HCT116 (cell line): ENCODE measurements at regions of chr3 and their contacts with region 1.

Region 1: GRCh38 chr3:189652042-189652441 is 20.9 kb downstream of the TP63 start:
- DNase-seq: peak; percentile 21
- ATAC-seq: peak; percentile 88
- H3K4me3 ChIP-seq: no peak overlapping the region
- H3K27ac ChIP-seq: no peak overlapping the region
- H3K4me1 ChIP-seq: no peaks in the 10 kb centered on the region
- H3K27me3 ChIP-seq: no peaks in the 10 kb centered on the region
- CTCF ChIP-seq: peak; percentile 46 to 81 (median 74); a peak in 5 of 6 replicates
- POLR2A ChIP-seq: no peak
- RAD21 ChIP-seq: peak; percentile 58

Region 2: DNA sequence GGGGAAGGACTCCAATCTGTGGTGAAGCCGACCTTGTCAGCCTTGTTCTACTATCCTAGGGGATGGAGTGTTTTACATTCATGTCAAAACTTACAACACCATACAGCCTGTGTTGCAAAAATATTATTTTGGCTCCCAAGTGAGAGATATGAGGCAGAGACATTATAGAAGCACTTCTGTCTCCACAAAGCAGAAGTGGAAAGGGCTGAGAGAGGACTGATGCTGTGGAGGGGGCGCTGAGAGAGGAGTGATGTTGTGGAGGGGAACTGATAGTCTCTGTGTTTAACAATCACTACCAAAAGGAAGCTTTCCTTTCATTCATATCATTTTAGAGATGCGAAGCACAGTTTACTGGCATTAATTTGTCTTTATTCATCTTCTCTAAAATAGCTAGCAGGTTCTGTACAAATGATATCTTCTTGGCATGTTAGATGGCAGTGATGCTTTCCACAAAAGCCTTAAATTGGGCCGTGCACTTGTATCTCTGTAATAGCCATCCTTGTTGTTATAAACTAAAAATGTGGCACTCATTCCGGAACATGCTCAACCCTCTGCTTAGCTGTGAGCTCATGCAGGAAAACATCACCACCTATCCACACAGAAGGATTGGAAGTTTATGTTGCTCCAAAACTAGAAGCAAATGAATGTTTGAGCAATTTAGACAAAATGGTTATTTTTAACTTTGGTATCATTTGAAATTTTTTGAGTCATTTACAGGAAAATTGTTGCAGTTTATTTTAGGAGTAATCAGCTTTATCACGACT is 155.5 kb before region 1 on chr3:
- CTCF ChIA-PET with region 1: no interaction called
- POLR2A ChIA-PET with region 1: no interaction called
- RAD21 ChIA-PET with region 1: no interaction called
- intact Hi-C with region 1: no loop called
- DNase-seq: no peak
- ATAC-seq: no peak
- H3K4me3 ChIP-seq: no peak overlapping the region
- H3K27ac ChIP-seq: no peak overlapping the region
- H3K4me1 ChIP-seq: no peaks in the 10 kb centered on the region
- H3K27me3 ChIP-seq: no peaks in the 10 kb centered on the region
- CTCF ChIP-seq: no peak
- POLR2A ChIP-seq: no peak
- RAD21 ChIP-seq: no peak

Region 3: GRCh38 chr3:189630767-189631372 is 21.2 kb before region 1 on chr3:
- CTCF ChIA-PET with region 1: no interaction called
- POLR2A ChIA-PET with region 1: no interaction called
- RAD21 ChIA-PET with region 1: no interaction called
- intact Hi-C with region 1: no loop called
- DNase-seq: no peak
- ATAC-seq: no peak
- H3K4me3 ChIP-seq: no peak overlapping the region
- H3K27ac ChIP-seq: no peak overlapping the region
- H3K4me1 ChIP-seq: no peaks in the 10 kb centered on the region
- H3K27me3 ChIP-seq: no peaks in the 10 kb centered on the region
- CTCF ChIP-seq: no peak
- POLR2A ChIP-seq: no peak
- RAD21 ChIP-seq: no peak

Region 4: DNA sequence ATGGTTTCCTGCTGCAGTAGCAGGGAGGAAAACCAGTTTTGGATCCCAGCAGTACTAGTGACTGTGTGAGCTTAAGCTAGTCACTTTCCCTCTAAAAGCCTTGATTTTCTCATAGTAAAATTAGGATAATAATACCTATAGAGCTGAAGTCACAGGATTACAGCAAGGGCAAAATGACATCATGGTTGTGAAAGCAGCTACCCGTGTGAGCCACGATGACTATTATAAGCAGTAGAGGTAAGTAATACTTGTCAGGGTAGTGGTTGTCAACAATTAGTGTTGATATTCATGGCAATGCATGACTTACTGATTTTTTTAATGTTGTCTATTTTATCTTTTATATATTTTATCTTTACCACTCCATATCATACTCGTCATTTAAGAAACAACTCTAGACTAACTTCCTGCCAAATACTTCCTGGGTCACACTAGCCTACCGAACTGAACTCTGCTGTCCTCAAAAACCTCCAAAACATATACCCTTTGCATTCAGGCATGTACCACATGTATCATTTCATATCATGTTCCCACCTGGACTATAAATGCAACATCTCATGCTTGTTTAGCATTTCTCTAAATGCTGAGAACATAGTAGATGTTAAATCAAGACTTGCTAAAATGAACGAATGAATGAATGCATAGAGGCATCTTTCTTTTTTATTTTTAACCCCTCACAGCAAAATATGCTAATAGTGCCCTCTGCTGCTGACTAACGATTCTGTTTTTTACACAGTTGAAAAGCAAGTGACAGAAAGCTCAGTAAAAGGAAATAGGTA is 296.1 kb after region 1 on chr3:
- CTCF ChIA-PET with region 1: interaction called, 11 read pairs
- POLR2A ChIA-PET with region 1: no interaction called
- RAD21 ChIA-PET with region 1: no interaction called
- intact Hi-C with region 1: loop called (anchors 2 kb)
- DNase-seq: no peak
- ATAC-seq: peak; percentile 58
- H3K4me3 ChIP-seq: no peak overlapping the region
- H3K27ac ChIP-seq: no peak overlapping the region
- H3K4me1 ChIP-seq: peaks cover 2 to 13% of the 10 kb centered on the region in 2 experiments; a peak in 2 of 4 replicates
- H3K27me3 ChIP-seq: no peaks in the 10 kb centered on the region
- CTCF ChIP-seq: peak; percentile 54 to 87 (median 79)
- POLR2A ChIP-seq: no peak
- RAD21 ChIP-seq: peak; percentile 96